CD14-positive monocyte (primary cell): ENCODE measurements at regions of chr19 and their contacts with region 1.

Region 1: GRCh38 chr19:44723952-44724319 is 24.6 kb upstream of the BCL3 start:
- DNase-seq: peak; percentile 85 to 89 (median 87)
- H3K4me3 ChIP-seq: no peak overlapping the region
- H3K4me3 Mint-ChIP-seq: peak overlapping the region in 1 of 2 donors; percentile 76
- H3K27ac ChIP-seq: peak overlapping the region in 1 of 2 donors; percentile 30
- H3K27ac Mint-ChIP-seq: peak overlapping the region in 6 of 7 donors; percentile 53 to 88 (median 72)
- H3K4me1 ChIP-seq: peaks cover 51 to 69% of the 10 kb centered on the region in 2 donors
- H3K4me1 Mint-ChIP-seq: peaks cover 68% of the 10 kb centered on the region
- H3K27me3 ChIP-seq: no peaks in the 10 kb centered on the region
- H3K27me3 Mint-ChIP-seq: peaks cover 1 to 9% (median 6%) of the 10 kb centered on the region in 3 donors
- CTCF ChIP-seq: peak; percentile 99

Region 2: GRCh38 chr19:44653977-44654774 is 69.8 kb before region 1 on chr19:
- intact Hi-C with region 1: loop called in 1 of 2 experiments (anchors 10 kb)
- DNase-seq: peak; percentile 78 to 87 (median 78)
- H3K4me3 ChIP-seq: no peak overlapping the region
- H3K4me3 Mint-ChIP-seq: no peak overlapping the region
- H3K27ac ChIP-seq: no peak overlapping the region
- H3K27ac Mint-ChIP-seq: peak overlapping the region in 4 of 7 donors; percentile 18 to 68 (median 62)
- H3K4me1 ChIP-seq: no peaks in the 10 kb centered on the region
- H3K4me1 Mint-ChIP-seq: peaks cover 8% of the 10 kb centered on the region
- H3K27me3 ChIP-seq: no peaks in the 10 kb centered on the region
- H3K27me3 Mint-ChIP-seq: peaks cover 0 to 2% (median 2%) of the 10 kb centered on the region in 3 donors
- CTCF ChIP-seq: peak; percentile 81

Region 3: DNA sequence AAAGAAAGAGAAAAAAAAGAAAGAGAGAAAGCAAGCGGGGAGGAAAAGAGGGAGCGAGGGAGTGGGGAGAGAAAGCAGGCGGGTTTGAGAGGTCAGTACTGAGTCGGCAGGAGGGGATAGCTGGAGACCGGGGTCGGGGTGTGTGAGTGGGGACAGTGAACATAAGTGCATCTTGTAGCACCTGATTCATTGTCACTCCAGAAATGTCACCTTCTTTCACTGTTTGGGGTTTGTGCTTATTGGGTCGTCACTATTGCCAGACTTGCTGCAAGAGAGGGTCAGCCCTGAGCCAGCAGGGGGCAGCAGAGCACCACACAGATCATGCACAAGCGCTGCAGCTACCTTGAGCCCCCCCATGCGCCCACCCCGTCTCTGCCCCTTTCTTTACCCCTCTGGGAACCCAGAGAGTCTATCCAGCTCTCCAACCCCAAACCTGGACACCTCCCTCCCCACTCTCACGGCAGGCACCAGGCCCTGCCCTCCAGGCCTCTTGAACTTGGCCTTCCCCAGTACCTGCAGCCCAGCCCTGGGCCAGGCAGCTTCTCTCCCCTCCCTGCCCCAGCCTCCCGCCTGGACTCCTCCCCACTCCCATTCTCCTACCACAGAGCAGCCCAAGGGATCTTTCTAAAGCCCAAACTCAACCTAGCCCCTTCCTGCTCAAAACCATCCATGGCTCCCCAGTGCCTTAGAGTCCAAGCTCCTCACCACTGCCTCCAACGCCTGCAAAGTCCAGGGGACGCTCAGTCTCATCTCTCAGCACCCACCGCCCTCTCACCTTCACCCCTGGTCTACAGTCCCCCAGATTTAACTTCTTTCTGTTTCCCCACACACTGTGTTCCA is 34.7 kb before region 1 on chr19:
- intact Hi-C with region 1: loop called (anchors 2 to 5 kb)
- DNase-seq: peak; percentile 54 to 75 (median 60)
- H3K4me3 ChIP-seq: no peak overlapping the region
- H3K4me3 Mint-ChIP-seq: peak overlapping the region; percentile 24 to 60
- H3K27ac ChIP-seq: no peak overlapping the region
- H3K27ac Mint-ChIP-seq: peak overlapping the region in 6 of 7 donors; percentile 40 to 90 (median 62)
- H3K4me1 ChIP-seq: peaks cover 74 to 84% of the 10 kb centered on the region in 2 donors
- H3K4me1 Mint-ChIP-seq: peaks cover 77% of the 10 kb centered on the region
- H3K27me3 ChIP-seq: no peaks in the 10 kb centered on the region
- H3K27me3 Mint-ChIP-seq: peaks cover 3 to 5% (median 3%) of the 10 kb centered on the region in 3 donors
- CTCF ChIP-seq: peak; percentile 97

Region 4: GRCh38 chr19:44737238-44738071 is 13.5 kb after region 1 on chr19:
- intact Hi-C with region 1: loop called in 1 of 2 experiments (anchors 2 kb)
- DNase-seq: peak in 2 of 3 donors; percentile 42 to 50
- H3K4me3 ChIP-seq: no peak overlapping the region
- H3K4me3 Mint-ChIP-seq: peak overlapping the region; percentile 30 to 34
- H3K27ac ChIP-seq: peak overlapping the region; percentile 81 to 88
- H3K27ac Mint-ChIP-seq: peak overlapping the region; percentile 88 to 97 (median 94)
- H3K4me1 ChIP-seq: peaks cover 83 to 91% of the 10 kb centered on the region in 2 donors
- H3K4me1 Mint-ChIP-seq: peaks cover 78% of the 10 kb centered on the region
- H3K27me3 ChIP-seq: no peaks in the 10 kb centered on the region
- H3K27me3 Mint-ChIP-seq: peaks cover 0 to 2% (median 0%) of the 10 kb centered on the region in 3 donors
- CTCF ChIP-seq: no peak

Region 5: GRCh38 chr19:44770550-44771257 is 46.8 kb after region 1 on chr19:
- intact Hi-C with region 1: loop called (anchors 1 kb)
- DNase-seq: peak; percentile 94 to 99 (median 98)
- H3K4me3 ChIP-seq: peak overlapping the region in 1 of 3 experiments; percentile 46
- H3K4me3 Mint-ChIP-seq: peak overlapping the region; percentile 69 to 74
- H3K27ac ChIP-seq: peak overlapping the region in 1 of 2 donors; percentile 64
- H3K27ac Mint-ChIP-seq: peak overlapping the region; percentile 81 to 97 (median 93)
- H3K4me1 ChIP-seq: peaks cover 35 to 40% of the 10 kb centered on the region in 2 donors
- H3K4me1 Mint-ChIP-seq: peaks cover 40% of the 10 kb centered on the region
- H3K27me3 ChIP-seq: no peaks in the 10 kb centered on the region
- H3K27me3 Mint-ChIP-seq: peaks cover 0 to 23% (median 8%) of the 10 kb centered on the region in 3 donors
- CTCF ChIP-seq: peak; percentile 76

Region 6: DNA sequence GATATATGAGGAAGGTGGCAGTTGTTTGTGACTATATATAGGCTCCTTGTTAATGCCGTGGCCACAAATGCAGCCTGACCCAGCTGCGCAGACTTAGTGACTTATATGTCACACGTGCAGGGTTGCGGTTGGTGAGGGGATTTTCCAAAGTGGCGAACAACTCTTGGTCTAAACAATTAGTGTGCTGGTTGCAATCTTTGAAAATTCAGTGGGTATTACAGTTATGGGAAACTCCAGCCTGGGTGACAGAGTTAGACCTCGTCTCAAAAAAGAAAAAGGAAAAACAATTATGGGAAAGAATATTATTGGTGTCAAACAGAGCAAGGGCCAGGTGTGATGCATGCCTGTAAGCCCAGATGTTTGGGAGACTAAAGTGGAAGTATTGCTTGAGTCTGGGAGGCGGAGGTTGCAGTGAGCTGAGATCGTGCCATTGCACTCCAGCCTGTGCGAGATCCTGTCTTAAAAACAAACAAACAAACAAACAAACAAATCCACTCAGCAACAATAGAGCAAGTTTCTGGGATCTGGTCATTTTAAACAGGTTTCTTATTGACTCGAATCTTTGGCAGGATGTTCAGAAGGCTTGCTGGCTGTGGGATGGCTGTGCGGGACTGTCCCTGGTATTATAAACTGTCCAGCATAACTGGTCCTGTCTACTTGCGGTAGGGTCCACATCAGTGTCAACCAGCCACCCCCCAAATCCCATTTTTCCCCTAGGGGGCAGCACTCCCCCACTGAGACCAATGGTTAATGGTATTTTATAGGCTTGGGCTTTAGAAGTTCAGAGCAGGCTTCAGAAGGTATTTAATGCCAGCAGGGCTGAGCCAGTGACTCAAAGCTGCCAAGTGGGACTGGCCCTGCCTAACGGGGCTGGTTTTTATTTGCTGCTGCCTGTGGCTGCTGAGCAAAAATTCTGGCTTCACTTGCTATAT is 292.7 kb after region 1 on chr19:
- intact Hi-C with region 1: no loop called
- DNase-seq: peak; percentile 51 to 57 (median 54)
- H3K4me3 ChIP-seq: no peak overlapping the region
- H3K4me3 Mint-ChIP-seq: no peak overlapping the region
- H3K27ac ChIP-seq: no peak overlapping the region
- H3K27ac Mint-ChIP-seq: peak overlapping the region in 2 of 7 donors; percentile 69 to 77
- H3K4me1 ChIP-seq: no peaks in the 10 kb centered on the region
- H3K4me1 Mint-ChIP-seq: no peaks in the 10 kb centered on the region
- H3K27me3 ChIP-seq: no peaks in the 10 kb centered on the region
- H3K27me3 Mint-ChIP-seq: peaks cover 0 to 1% (median 0%) of the 10 kb centered on the region in 3 donors
- CTCF ChIP-seq: peak; percentile 74